CD4-positive, alpha-beta T cell (primary cell): ENCODE measurements at regions of chr2 and their contacts with region 1.

Region 1: DNA sequence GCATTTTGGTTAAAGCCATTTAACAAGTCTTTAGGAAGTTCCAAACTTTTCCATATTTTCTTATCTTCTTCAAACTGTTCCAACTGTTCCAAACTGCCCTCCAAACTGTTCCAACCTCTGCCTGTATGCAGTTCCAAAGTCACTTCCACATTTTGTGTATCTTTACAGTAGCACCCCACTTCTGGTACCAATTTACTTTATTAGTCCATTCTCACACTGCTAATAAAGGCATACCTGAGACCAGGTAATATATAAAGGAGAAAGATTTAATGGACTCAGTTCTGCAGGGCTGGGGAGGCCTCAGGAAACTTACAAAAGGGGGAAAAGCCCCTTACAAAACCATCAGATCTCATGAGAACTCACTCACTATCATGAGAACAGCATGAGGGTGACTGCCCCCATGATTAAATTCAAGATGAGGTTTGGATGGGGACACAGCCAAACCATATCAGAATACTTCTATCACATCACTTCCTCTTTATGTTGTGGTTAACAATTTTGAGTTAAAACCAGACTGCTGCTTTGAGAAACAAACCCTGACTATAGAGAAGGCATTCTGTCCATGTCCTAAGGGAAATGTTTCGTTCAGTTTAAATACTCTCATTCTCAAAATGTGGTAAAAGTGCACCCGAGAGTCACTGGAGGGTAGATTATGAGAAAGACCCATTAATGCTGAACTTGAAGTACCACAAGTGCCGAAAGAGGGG is 11.0 kb downstream of the IL18R1 start:
- DNase-seq: peak in 3 of 14 experiments; percentile 42 to 67 (median 59)
- ATAC-seq: peak; percentile 26
- H3K4me3 ChIP-seq: peak overlapping the region; percentile 30
- H3K4me3 Mint-ChIP-seq: peak overlapping the region; percentile 55
- H3K27ac ChIP-seq: peak overlapping the region in 1 of 2 donors; percentile 52
- H3K27ac Mint-ChIP-seq: peak overlapping the region; percentile 83
- H3K4me1 ChIP-seq: peaks cover 40% of the 10 kb centered on the region
- H3K4me1 Mint-ChIP-seq: peaks cover 53% of the 10 kb centered on the region
- H3K27me3 ChIP-seq: no peaks in the 10 kb centered on the region
- H3K27me3 Mint-ChIP-seq: no peaks in the 10 kb centered on the region
- CTCF ChIP-seq: no peak

Region 2: DNA sequence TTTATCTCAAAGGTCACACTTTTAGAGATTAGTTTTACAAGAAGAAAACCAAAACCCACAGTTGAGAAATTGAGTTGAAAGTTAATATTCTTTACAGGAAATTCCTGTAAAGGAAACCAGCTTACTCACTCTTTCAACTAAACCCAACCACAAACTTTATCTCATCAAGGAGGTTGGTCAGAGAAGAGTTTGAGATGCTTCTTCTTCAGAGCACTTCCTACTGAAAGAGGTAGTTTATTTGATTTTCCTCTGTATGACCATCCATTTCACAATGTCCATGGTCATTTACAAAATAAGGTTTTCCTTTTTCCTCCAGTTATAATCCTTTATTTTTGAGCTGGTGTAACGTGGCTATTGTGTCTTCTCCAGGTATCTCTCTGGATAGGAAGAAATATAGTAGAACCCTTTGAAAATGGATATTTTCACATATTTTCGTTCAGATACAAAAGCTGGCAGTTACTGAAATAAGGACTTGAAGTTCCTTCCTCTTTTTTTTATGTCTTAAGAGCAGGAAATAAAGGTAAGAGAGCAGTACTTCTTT is 51.9 kb after region 1 on chr2:
- CTCF ChIA-PET with region 1: no interaction called
- POLR2A ChIA-PET with region 1: interaction called, 4 read pairs
- intact Hi-C with region 1: loop called (anchors 1 to 5 kb)
- DNase-seq: peak in 3 of 14 experiments; percentile 64 to 80 (median 72)
- ATAC-seq: peak; percentile 67
- H3K4me3 ChIP-seq: peak overlapping the region; percentile 44
- H3K4me3 Mint-ChIP-seq: peak overlapping the region; percentile 80
- H3K27ac ChIP-seq: peak overlapping the region in 1 of 2 donors; percentile 69
- H3K27ac Mint-ChIP-seq: peak overlapping the region; percentile 73
- H3K4me1 ChIP-seq: peaks cover 45% of the 10 kb centered on the region
- H3K4me1 Mint-ChIP-seq: peaks cover 72% of the 10 kb centered on the region
- H3K27me3 ChIP-seq: no peaks in the 10 kb centered on the region
- H3K27me3 Mint-ChIP-seq: no peaks in the 10 kb centered on the region
- CTCF ChIP-seq: no peak

Region 3: GRCh38 chr2:102424754-102425153 is 58.2 kb after region 1 on chr2:
- CTCF ChIA-PET with region 1: no interaction called
- POLR2A ChIA-PET with region 1: interaction called, 3 read pairs
- intact Hi-C with region 1: loop called in 1 of 2 experiments (anchors 5 kb)
- DNase-seq: no peak
- ATAC-seq: no peak
- H3K4me3 ChIP-seq: no peak overlapping the region
- H3K4me3 Mint-ChIP-seq: peak overlapping the region; percentile 5
- H3K27ac ChIP-seq: no peak overlapping the region
- H3K27ac Mint-ChIP-seq: no peak overlapping the region
- H3K4me1 ChIP-seq: peaks cover 21% of the 10 kb centered on the region
- H3K4me1 Mint-ChIP-seq: peaks cover 51% of the 10 kb centered on the region
- H3K27me3 ChIP-seq: no peaks in the 10 kb centered on the region
- H3K27me3 Mint-ChIP-seq: no peaks in the 10 kb centered on the region
- CTCF ChIP-seq: no peak